Caco-2 (cell line): ENCODE measurements at regions of chr6 and their contacts with region 1.

Region 1: DNA sequence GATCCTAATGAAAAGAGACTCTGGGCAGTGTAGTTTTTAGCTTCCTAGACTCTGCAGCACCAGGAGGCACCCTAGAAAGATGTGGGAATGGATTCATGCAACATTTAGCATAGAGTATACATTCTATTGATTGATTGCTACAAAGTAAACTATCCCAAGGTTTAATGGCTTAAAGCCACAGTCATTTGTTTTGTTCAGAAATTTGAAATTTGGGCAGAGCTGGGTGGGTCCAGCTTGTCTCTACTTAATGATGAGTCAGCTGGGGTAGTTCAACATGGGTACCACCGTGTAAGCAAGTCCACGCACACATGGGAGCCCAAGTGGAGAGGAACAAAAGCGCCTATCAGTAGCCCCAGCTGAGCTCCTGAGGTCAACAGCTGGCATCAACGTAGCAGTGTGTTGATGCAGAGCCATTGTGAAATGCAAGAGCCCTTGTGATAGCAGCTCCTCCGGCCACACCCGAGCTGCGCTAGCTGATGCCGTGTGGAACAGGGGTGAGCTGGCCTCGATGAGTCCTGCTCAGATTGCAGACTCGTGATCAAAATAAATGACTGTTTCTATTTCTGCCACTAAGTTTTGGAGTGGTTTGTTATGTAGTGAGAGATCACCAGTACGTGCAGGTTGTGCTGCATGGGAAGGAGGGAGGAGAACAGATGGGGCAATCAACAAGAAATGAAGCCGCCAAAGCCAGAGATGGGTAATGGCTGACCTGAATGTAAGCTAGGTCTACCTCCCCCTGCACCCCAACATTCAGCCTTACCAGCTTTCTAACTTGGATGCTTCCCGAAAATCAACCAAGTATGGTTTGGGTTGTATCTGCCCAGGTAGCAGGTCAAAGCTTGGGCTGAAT is 45.7 kb upstream of the TRAF3IP2 start:
- DNase-seq: no peak
- H3K4me3 ChIP-seq: no peak overlapping the region
- H3K4me3 Mint-ChIP-seq: no peak overlapping the region
- H3K27ac Mint-ChIP-seq: no peak overlapping the region
- H3K4me1 ChIP-seq: peaks cover 30% of the 10 kb centered on the region
- H3K4me1 Mint-ChIP-seq: peaks cover 42% of the 10 kb centered on the region
- H3K27me3 ChIP-seq: no peaks in the 10 kb centered on the region
- H3K27me3 Mint-ChIP-seq: no peaks in the 10 kb centered on the region
- CTCF ChIP-seq: no peak

Region 2: GRCh38 chr6:111483736-111484632 is 167.4 kb before region 1 on chr6:
- CTCF ChIA-PET with region 1: no interaction called
- POLR2A ChIA-PET with region 1: no interaction called
- intact Hi-C with region 1: loop called (anchors 2 kb)
- DNase-seq: peak; percentile 93 to 94
- H3K4me3 ChIP-seq: peak overlapping the region; percentile 61
- H3K4me3 Mint-ChIP-seq: peak overlapping the region; percentile 96
- H3K27ac Mint-ChIP-seq: peak overlapping the region; percentile 98
- H3K4me1 ChIP-seq: peaks cover 7% of the 10 kb centered on the region; the same call in 1 of the 2 replicates
- H3K4me1 Mint-ChIP-seq: peaks cover 14% of the 10 kb centered on the region
- H3K27me3 ChIP-seq: no peaks in the 10 kb centered on the region
- H3K27me3 Mint-ChIP-seq: no peaks in the 10 kb centered on the region
- CTCF ChIP-seq: no peak

Region 3: DNA sequence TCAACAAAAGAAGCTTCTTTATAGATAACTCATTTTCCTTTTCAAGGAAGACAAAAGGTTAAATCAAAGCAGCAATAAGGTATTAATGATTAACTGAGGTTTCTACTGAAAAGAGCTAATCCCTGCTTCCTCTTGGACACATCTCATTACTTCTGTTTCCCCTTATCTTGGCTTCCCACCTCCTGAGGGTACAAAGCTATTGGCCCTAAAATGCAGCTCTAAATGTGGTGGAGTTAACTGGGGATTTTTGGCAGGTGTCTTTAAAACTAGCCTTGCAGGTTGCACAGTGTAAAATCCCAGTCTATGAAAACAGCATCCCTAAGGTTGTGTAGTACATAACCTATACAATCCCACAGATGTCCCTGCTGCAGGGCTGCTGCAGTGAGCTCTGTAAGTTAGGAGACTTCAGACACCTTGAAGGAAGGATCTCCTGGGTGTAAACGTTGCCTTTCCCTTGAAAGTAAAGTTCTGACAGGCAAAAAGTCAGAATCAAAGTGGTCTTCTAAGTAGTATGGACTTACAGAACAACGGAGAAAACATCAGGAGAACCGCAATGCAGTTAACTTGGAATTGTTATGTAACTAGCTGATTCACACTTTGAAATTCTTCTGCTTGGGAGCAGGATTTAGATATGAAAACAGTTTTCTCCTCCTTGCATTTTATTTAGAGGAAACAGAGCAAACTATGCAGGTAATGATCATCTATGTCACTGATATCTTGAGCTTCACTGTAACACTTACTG is 26.0 kb after region 1 on chr6:
- CTCF ChIA-PET with region 1: interaction called, 4 read pairs
- POLR2A ChIA-PET with region 1: no interaction called
- intact Hi-C with region 1: loop called (anchors 1 kb)
- DNase-seq: peak in 1 of 2 experiments; percentile 30
- H3K4me3 ChIP-seq: no peak overlapping the region
- H3K4me3 Mint-ChIP-seq: no peak overlapping the region
- H3K27ac Mint-ChIP-seq: no peak overlapping the region
- H3K4me1 ChIP-seq: peaks cover 31% of the 10 kb centered on the region
- H3K4me1 Mint-ChIP-seq: peaks cover 17% of the 10 kb centered on the region
- H3K27me3 ChIP-seq: no peaks in the 10 kb centered on the region
- H3K27me3 Mint-ChIP-seq: no peaks in the 10 kb centered on the region
- CTCF ChIP-seq: no peak